T-cell (primary cell): ENCODE measurements at regions of chr2 and their contacts with region 1.

Region 1: DNA sequence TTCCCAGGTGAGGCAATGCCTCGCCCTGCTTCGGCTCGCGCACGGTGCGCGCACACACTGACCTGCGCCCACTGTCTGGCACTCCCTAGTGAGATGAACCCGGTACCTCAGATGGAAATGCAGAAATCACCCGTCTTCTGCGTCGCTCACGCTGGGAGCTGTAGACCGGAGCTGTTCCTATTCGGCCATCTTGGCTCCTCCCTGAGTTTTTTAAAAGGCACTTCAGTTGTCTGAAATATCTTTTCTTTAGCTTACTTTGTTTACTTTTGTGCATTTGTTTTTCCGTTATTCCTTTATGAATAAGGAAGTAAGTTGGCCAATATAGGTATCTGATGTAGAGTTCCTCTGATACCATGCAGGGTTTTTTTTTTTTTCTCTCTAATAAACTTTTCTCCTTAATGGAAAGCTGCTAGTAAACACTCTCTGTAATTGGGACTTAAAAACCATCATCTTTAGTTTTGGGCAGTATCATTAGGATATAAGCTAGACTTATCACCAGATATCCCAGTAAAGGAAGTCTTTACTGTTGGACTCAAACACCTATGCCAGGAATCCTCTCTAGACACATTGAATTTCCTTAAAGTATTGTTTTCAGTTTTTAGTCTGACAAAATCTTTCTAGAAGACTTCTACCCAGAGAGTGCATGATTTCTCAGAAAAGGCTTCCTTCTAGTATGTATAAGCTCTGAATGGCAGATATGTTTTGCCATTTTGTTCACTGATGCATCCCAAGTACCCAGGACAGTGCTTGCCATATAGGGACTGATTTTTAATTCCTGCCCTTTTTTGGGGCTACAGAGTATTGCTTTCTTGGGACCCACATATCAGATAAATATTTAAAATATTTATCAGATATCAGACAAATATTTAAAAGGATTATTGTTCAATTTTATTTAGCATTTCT is 35.8 kb upstream of the DYSF start:
- DNase-seq: peak in 4 of 35 experiments; percentile 0 to 58 (median 6)
- ATAC-seq: peak in 3 of 4 experiments; percentile 47 to 66 (median 52)
- H3K4me3 ChIP-seq: peak overlapping the region in 1 of 2 donors; percentile 34
- H3K4me3 Mint-ChIP-seq: peak overlapping the region; percentile 82 to 85 (median 83)
- H3K27ac ChIP-seq: peak overlapping the region; percentile 73
- H3K27ac Mint-ChIP-seq: peak overlapping the region; percentile 87 to 94
- H3K4me1 ChIP-seq: peaks cover 0 to 2% of the 10 kb centered on the region in 2 experiments
- H3K4me1 Mint-ChIP-seq: peaks cover 11 to 21% (median 15%) of the 10 kb centered on the region in 3 donors
- H3K27me3 ChIP-seq: no peaks in the 10 kb centered on the region
- H3K27me3 Mint-ChIP-seq: no peaks in the 10 kb centered on the region

Region 2: DNA sequence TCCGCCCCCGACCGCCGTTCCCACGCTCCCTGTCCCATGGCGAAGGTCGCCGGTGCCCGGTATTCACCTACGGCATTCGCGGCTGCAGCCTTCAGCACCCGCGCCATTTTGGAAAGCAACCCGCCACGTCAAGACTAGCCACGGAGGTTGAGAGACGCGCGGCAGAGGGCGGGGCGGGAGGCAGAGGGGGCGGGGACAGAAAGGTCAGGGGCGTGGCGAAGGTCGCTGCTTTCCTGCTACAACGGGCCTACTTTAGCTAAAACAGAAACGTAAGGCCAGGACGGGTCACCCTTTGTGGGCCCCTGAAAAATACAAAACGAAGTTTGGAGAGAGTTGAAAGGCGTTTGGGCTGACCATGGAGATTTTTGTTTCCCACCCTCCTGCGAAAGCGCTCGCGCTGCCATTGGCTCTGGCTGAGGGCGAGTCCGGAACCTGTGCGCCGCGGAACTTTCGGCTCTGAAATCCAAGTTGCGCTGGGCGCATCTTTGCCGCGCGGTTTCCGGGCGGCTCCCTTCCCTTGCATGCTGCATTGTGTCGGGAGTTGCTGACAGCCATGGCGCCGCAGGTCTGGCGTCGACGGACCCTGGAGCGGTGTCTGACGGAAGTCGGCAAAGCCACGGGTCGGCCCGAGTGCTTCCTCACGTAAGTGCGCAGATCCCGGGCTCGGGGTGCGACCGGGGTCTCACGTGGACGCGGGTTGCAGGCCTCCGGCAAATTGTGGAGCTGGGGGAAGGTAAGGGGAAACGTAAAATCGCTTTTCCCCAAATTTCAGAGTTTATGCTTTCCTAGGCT is 287.2 kb before region 1 on chr2 and contains the starts of genes MCEE and MPHOSPH10:
- CTCF ChIA-PET with region 1: no interaction called
- POLR2A ChIA-PET with region 1: interaction called in 1 of 2 experiments, 13 read pairs
- DNase-seq: peak; percentile 76 to 93 (median 86)
- ATAC-seq: peak; percentile 90 to 95 (median 94)
- H3K4me3 ChIP-seq: peak within 1 kb of the TSS; percentile 85 to 98
- H3K4me3 Mint-ChIP-seq: no peak within 1 kb of the TSS
- H3K27ac ChIP-seq: peak within 1 kb of the TSS; percentile 77
- H3K27ac Mint-ChIP-seq: peak within 1 kb of the TSS in 1 of 2 donors; percentile 70
- H3K4me1 ChIP-seq: peaks cover 17 to 20% of the 10 kb centered on the region in 2 experiments
- H3K4me1 Mint-ChIP-seq: peaks cover 19 to 26% (median 20%) of the 10 kb centered on the region in 3 donors
- H3K27me3 ChIP-seq: no peaks in the 10 kb centered on the region
- H3K27me3 Mint-ChIP-seq: no peaks in the 10 kb centered on the region
- total RNA-seq, gene MCEE: 13.7 to 22.4 (median 19.5) TPM
- total RNA-seq, gene MPHOSPH10: 34.8 to 49.6 (median 39.9) TPM

Region 3: DNA sequence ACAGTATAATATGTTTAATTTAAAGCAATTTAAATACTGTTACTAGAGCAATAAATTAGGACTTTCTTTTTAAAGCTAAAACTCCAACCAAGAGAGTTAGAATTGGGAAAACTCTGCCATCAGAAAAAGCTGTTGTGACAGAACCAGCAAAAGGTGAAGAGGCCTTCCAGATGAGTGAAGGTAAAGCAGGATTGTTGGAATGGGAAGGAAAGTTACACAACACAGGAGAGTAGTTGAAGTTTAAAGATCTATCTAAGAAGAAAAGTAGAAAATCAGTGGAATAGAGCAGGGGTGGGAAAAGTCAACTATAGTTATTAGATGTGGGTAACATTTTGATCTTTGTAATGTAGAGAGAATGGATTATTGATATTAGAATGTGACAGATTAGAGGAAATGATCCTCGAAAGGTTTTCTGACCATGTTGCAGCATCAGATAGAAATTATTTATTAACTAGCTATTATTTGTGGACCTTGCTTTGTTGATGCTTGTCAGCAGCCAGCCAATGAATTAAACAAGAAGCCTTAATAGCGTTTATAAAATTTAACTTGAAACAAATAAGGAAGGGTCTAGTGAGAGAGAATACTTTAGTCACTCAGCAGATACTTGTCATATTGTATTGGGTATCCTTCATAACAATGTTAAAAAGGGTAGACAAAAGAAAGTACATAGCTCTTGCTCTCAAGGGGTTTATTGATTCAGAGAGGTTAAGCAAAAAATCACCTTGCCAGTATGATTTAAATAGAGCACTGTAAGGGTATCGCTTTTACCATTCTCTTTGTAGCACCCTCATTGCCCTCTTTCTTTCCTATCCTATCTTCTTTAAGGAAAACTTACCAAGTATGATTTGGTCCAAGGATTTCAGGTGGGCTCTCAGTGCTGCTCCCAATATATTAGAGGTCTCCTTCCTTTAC is 11.2 kb after region 1 on chr2:
- CTCF ChIA-PET with region 1: no interaction called
- POLR2A ChIA-PET with region 1: interaction called in 1 of 2 experiments, 10 read pairs
- DNase-seq: no peak
- ATAC-seq: no peak
- H3K4me3 ChIP-seq: no peak overlapping the region
- H3K4me3 Mint-ChIP-seq: no peak overlapping the region
- H3K27ac ChIP-seq: no peak overlapping the region
- H3K27ac Mint-ChIP-seq: peak overlapping the region in 1 of 2 donors; percentile 34
- H3K4me1 ChIP-seq: no peaks in the 10 kb centered on the region
- H3K4me1 Mint-ChIP-seq: peaks cover 0 to 3% (median 2%) of the 10 kb centered on the region in 3 donors
- H3K27me3 ChIP-seq: no peaks in the 10 kb centered on the region
- H3K27me3 Mint-ChIP-seq: no peaks in the 10 kb centered on the region